ENCODE measurements at regions of chr1 and their contacts with region 1.

Region 1: GRCh38 chr1:26900001-26900814 is at the start of gene GPATCH3:
- DNase-seq: peak; percentile 95
- ATAC-seq: peak; percentile 95
- H3K4me3 Mint-ChIP-seq: peak within 1 kb of the TSS; percentile 93
- H3K27ac Mint-ChIP-seq: peak within 1 kb of the TSS; percentile 100
- H3K4me1 Mint-ChIP-seq: peaks cover 34% of the 10 kb centered on the region
- H3K27me3 Mint-ChIP-seq: no peaks in the 10 kb centered on the region
- CTCF ChIP-seq: no peak
- total RNA-seq, gene GPATCH3: 8.7 to 9.6 TPM

Region 2: DNA sequence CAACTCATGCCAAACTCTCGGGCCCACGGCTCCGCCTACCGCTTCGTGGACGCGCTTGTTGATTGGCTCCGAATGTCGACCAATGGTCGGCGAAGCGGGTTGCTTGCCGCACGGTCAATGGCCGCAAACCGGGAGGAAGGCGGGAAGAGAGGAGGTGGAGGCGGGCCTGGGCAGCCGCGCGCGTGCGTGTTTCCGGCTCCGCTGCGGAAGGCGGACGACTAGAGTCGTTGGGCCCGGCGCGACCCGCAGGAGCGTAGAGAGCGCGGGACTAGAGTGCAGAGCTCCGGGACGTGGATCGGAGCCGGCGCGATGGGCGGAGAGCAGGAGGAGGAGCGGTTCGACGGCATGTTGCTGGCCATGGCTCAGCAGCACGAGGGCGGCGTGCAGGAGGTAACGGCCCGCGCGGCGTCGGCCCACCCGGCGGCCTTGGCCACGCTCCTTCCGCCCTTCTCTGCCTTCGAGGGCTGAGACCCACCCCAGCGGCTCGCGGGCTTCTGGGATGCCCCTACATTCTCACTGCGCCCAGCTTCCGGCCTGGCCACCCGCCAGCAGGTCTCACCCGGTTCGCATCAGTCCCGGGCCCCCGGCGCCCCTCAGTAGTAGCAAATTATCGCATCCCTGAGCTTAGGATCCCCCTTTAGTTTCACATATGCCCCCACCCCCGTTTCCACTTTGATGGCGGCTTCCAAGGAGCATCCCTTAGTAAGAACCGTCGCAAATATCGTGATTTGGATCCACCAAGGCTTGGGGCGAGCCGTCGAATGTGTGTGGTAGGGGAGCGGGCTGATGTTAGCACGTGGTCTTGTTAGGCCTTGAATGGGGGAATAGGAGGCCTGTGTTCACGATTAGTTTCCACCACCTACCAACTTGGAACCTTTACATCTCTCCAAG is 21.6 kb after region 1 on chr1 and contains the start of gene NUDC:
- CTCF ChIA-PET with region 1: interaction called, 3 read pairs
- POLR2A ChIA-PET with region 1: interaction called, 31 read pairs
- intact Hi-C with region 1: no loop called
- DNase-seq: peak; percentile 98
- ATAC-seq: peak; percentile 96
- H3K4me3 Mint-ChIP-seq: peak within 1 kb of the TSS; percentile 93
- H3K27ac Mint-ChIP-seq: peak within 1 kb of the TSS; percentile 98
- H3K4me1 Mint-ChIP-seq: peaks cover 39% of the 10 kb centered on the region
- H3K27me3 Mint-ChIP-seq: no peaks in the 10 kb centered on the region
- CTCF ChIP-seq: no peak
- total RNA-seq, gene NUDC: 97.0 to 103 TPM